Activated B cell treated with CpG ODN at 0.5 μM for 24 hours (primary cell): ENCODE measurements at regions of chr14 and their contacts with region 1.

Region 1: DNA sequence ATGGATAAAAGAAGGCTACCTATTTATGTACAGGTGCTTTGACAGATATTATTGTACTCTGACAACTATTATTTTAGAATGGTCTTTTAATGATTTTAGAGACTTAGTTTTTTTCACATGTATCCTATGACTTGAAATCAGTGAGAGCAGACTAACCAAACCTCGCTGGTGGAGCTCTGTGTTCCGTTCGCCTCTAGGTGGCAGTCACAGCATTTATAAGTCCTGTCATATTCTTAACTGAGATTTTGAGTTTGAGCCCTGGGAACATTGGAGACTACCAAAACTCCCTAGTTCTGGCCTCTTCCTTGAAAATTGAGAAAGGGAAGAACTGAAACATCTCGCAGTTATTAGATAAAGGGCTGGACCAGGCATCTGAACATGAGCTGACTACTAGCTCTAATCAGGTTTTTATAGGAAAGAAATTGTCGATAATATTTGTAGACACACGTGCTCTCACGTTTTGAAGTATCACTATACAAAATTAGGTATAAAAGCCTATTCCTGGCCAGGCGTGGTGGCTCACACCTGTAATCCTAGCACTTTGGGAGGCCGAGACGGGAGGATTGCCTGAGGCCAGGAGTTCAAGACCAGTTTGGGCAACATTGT is 48.3 kb downstream of the TTLL5 start:
- DNase-seq: no peak
- ATAC-seq: peak; percentile 70
- H3K4me3 Mint-ChIP-seq: no peak overlapping the region
- H3K27ac Mint-ChIP-seq: no peak overlapping the region
- H3K4me1 Mint-ChIP-seq: no peaks in the 10 kb centered on the region
- H3K27me3 Mint-ChIP-seq: no peaks in the 10 kb centered on the region
- CTCF ChIP-seq: peak; percentile 58

Region 2: GRCh38 chr14:75566321-75566720 is 143.0 kb before region 1 on chr14:
- CTCF ChIA-PET with region 1: no interaction called
- POLR2A ChIA-PET with region 1: no interaction called
- intact Hi-C with region 1: no loop called
- DNase-seq: no peak
- ATAC-seq: peak; percentile 35
- H3K4me3 Mint-ChIP-seq: no peak overlapping the region
- H3K27ac Mint-ChIP-seq: no peak overlapping the region
- H3K4me1 Mint-ChIP-seq: peaks cover 17% of the 10 kb centered on the region
- H3K27me3 Mint-ChIP-seq: no peaks in the 10 kb centered on the region
- CTCF ChIP-seq: no peak

Region 3: DNA sequence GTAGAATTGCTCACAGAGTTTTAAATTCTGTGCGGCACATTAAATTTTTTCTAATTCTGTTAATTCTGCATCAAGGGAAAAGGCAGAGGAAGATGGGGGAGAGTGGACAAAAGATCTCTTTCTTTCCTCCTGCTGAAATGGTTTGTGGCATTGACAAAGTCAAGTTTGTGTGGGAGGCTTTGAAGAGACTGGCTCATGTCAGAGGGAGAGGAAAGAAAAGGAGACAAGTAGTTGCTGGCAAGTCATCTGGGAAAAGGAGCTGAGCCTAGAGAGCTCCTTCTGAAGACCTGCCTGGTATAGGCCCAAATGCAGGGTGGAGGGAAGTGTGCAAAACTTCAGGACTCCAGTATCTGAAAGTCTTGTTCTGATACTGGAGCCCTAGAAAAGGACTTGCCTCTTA is 11.9 kb before region 1 on chr14:
- CTCF ChIA-PET with region 1: interaction called, 10 read pairs
- POLR2A ChIA-PET with region 1: no interaction called
- intact Hi-C with region 1: no loop called
- DNase-seq: no peak
- ATAC-seq: no peak
- H3K4me3 Mint-ChIP-seq: no peak overlapping the region
- H3K27ac Mint-ChIP-seq: no peak overlapping the region
- H3K4me1 Mint-ChIP-seq: peaks cover 7% of the 10 kb centered on the region
- H3K27me3 Mint-ChIP-seq: no peaks in the 10 kb centered on the region
- CTCF ChIP-seq: no peak

Region 4: GRCh38 chr14:76352639-76353281 is 643.5 kb after region 1 on chr14:
- CTCF ChIA-PET with region 1: interaction called, 3 read pairs
- POLR2A ChIA-PET with region 1: no interaction called
- intact Hi-C with region 1: loop called (anchors 1 kb)
- DNase-seq: peak; percentile 53
- ATAC-seq: no peak
- H3K4me3 Mint-ChIP-seq: peak overlapping the region; percentile 21
- H3K27ac Mint-ChIP-seq: no peak overlapping the region
- H3K4me1 Mint-ChIP-seq: peaks cover 2% of the 10 kb centered on the region
- H3K27me3 Mint-ChIP-seq: peaks cover 39% of the 10 kb centered on the region
- CTCF ChIP-seq: no peak

Region 5: DNA sequence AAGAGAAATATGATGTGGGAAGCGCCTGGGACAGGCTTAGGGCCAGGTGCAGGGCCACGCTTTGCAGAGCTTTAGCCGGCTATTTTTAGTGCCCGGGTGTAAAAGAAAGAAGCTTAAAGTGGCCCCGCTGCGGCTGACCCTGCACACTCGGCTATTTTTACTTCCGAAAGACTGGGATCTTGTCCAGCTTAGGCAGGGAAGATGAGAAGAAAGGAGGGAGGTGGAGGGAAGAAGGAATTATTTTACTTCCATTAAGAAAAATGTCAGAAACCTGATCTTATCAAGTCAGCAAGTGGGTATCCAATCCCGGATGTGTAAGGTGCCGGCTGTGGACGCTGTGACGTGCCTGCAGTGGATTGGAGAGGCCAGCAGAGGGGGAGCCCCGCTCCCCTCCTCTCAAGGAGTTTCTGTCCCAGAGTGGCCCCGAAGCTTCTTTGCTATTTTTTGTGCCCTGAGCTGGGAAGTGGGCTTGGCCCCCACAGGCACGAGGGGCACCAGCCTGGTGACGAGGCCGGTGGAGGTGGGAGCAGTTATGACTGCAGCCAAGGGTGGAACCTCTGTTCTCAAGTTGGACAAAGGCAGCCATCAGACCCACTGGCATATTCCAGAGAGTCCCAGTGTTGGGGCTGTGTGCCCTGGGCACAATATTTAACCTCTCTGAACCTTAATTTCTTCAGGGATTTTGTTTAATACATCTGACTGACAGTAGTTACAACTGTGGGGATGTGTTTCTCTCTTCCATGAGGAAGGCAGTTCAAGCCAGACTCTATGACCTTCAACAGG is 764.4 kb after region 1 on chr14:
- CTCF ChIA-PET with region 1: no interaction called
- POLR2A ChIA-PET with region 1: no interaction called
- intact Hi-C with region 1: no loop called
- DNase-seq: no peak
- ATAC-seq: no peak
- H3K4me3 Mint-ChIP-seq: no peak overlapping the region
- H3K27ac Mint-ChIP-seq: no peak overlapping the region
- H3K4me1 Mint-ChIP-seq: no peaks in the 10 kb centered on the region
- H3K27me3 Mint-ChIP-seq: peaks cover 13% of the 10 kb centered on the region
- CTCF ChIP-seq: no peak

Region 6: GRCh38 chr14:76647697-76648298 is 938.5 kb after region 1 on chr14:
- CTCF ChIA-PET with region 1: interaction called, 6 read pairs
- POLR2A ChIA-PET with region 1: no interaction called
- intact Hi-C with region 1: loop called (anchors 1 kb)
- DNase-seq: no peak
- ATAC-seq: peak; percentile 28
- H3K4me3 Mint-ChIP-seq: no peak overlapping the region
- H3K27ac Mint-ChIP-seq: no peak overlapping the region
- H3K4me1 Mint-ChIP-seq: no peaks in the 10 kb centered on the region
- H3K27me3 Mint-ChIP-seq: peaks cover 21% of the 10 kb centered on the region
- CTCF ChIP-seq: no peak